Psoas muscle (tissue), 8 donors: ENCODE measurements at regions of chr6 and their contacts with region 1.

Region 1: DNA sequence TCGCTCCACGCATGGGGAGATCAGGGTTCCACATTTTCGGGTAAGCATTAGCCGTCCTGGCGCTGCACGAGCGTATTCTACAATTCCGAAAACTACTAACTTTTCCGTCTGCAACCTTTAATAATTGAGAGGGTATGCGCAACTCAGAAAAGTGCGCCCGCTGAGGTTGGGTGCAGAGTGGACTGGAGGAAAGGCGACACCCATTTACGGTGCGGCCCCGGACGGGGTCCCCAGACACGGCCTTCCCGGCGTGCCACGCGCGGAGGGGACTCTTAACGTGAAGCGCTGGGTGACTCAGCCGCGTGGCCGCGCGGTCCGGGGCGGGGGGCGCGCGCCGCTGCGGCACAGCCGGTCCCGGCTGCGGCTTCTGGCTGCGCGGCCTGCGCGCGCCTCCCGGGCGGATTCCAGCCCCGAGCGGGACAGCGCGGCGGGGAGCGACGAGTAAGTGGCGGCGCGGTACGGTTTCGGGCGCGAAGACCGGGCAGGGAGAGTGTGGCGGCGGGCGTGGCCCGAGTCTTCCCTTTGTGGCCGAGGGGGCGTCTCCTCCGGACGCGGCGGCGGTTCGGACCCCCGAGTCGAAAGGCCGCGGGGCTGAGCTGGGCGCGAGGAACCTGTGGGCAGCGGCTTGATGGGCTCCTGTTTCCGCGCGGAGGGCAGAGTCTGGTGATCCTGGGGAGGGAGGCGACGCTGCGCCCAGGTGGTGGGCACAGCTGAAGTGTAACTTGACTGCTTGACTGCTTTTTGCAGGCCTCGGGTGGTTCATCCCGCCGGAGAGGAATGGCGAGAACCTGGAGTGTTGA is at the starts of genes KCTD20 and PXT1:
- DNase-seq: peak; percentile 91 to 95
- ATAC-seq: peak; percentile 88 to 93 (median 90)
- H3K4me3 ChIP-seq: peak within 1 kb of the TSS; percentile 77
- H3K27ac ChIP-seq: peak within 1 kb of the TSS; percentile 95
- H3K4me1 ChIP-seq: peaks cover 41% of the 10 kb centered on the region
- H3K27me3 ChIP-seq: no peaks in the 10 kb centered on the region
- CTCF ChIP-seq: no peak
- total RNA-seq, gene KCTD20: 20.5 to 30.4 (median 22.3) TPM
- total RNA-seq, gene PXT1: 0.10 to 0.34 (median 0.17) TPM in 3 of 4 donors, not detected in the other

Region 2: DNA sequence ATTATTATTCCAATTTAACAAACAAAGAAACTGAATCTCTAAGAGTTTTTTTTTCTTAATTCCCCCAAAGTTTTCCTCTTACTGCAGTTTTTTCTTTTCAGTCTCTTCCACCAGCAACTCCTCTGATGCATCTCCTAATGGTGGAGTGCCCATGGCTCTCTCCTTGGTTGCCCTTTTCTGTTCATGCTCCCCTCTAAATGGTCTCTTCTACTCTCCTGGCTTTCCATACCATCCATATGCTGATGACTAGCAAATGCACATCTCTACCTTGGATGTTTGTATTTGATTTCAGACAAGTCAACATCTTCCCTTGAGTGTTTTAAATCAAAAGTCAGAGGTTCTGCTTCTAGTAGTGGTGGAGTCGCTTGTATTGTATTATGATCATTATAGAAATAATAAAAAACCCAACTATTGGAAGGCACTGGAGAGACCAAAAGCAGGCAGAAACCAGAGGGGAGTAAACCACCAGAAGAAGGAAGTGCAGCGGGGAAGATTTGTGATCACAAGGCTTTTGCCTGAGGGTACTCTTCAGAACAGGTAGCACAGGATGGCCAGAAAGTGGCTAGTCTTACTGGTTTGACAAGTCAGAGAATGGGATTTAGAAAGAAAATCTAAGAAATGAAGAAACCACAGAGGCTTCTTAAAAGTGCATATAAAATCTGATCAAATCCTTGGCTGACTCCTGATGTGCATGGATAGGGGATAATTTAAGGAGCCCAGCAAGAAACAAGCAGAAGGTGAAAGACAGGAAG is 288.7 kb before region 1 on chr6:
- intact Hi-C with region 1: no loop called
- DNase-seq: no peak
- ATAC-seq: no peak
- H3K4me3 ChIP-seq: no peak overlapping the region
- H3K27ac ChIP-seq: no peak overlapping the region
- H3K4me1 ChIP-seq: no peaks in the 10 kb centered on the region
- H3K27me3 ChIP-seq: no peaks in the 10 kb centered on the region
- CTCF ChIP-seq: no peak

Region 3: GRCh38 chr6:36399970-36400369 is 42.9 kb before region 1 on chr6:
- intact Hi-C with region 1: no loop called
- DNase-seq: no peak
- ATAC-seq: no peak
- H3K4me3 ChIP-seq: no peak overlapping the region
- H3K27ac ChIP-seq: no peak overlapping the region
- H3K4me1 ChIP-seq: no peaks in the 10 kb centered on the region
- H3K27me3 ChIP-seq: no peaks in the 10 kb centered on the region
- CTCF ChIP-seq: no peak

Region 4: GRCh38 chr6:36423101-36423824 is 19.6 kb before region 1 on chr6:
- intact Hi-C with region 1: loop called (anchors 1 to 2 kb)
- DNase-seq: peak; percentile 99
- ATAC-seq: peak; percentile 99 to 100 (median 100)
- H3K4me3 ChIP-seq: peak overlapping the region; percentile 69
- H3K27ac ChIP-seq: peak overlapping the region; percentile 83
- H3K4me1 ChIP-seq: peaks cover 12% of the 10 kb centered on the region
- H3K27me3 ChIP-seq: no peaks in the 10 kb centered on the region
- CTCF ChIP-seq: peak; percentile 59

Region 5: GRCh38 chr6:36546920-36547645 is 104.2 kb after region 1 on chr6 and contains the start of gene STK38:
- intact Hi-C with region 1: loop called in 1 of 2 experiments (anchors 5 kb)
- DNase-seq: peak; percentile 90 to 97
- ATAC-seq: peak; percentile 96 to 98 (median 98)
- H3K4me3 ChIP-seq: peak within 1 kb of the TSS; percentile 99
- H3K27ac ChIP-seq: peak within 1 kb of the TSS; percentile 94
- H3K4me1 ChIP-seq: peaks cover 18% of the 10 kb centered on the region
- H3K27me3 ChIP-seq: no peaks in the 10 kb centered on the region
- CTCF ChIP-seq: no peak
- total RNA-seq, gene STK38: 7.7 to 13.6 (median 12.6) TPM

Region 6: DNA sequence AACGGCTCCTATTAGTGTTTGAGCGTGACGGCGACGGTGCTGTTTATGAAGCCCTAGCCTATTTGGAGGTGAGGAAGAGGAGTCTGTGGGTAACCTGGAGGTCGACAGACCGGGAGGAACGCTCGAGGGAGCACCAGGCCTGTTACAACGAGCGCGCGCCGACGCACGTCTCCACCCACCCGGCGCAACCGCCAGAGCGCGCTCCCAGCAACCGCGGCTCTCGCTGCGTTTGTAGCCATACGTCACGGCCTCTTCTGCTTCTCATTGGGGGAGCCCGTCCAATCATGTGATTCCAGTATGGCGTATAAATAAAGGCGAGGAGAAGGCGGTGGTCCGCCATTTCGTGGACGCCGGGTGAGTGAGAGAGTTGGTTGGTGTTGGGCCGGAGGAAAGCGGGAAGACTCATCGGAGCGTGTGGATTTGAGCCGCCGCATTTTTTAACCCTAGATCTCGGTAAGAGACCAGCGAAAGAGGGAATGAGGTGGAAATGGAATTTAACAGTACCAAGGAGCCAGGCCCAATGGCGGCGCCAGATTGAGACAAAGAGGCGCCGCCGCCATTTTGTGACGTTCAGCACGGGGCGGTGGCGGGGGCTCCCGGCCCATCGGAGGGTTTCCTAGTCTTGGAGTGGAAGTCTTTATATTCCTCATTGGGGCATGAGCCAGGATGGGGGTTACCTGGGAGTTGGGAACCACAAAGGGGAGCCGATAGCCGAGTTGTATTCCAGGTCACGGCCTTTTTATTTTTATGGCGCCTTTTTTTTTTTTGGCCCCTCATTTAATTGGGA is 151.4 kb after region 1 on chr6 and contains the start of gene SRSF3:
- intact Hi-C with region 1: loop called (anchors 5 to 10 kb)
- DNase-seq: peak; percentile 96 to 98
- ATAC-seq: peak; percentile 95 to 98 (median 98)
- H3K4me3 ChIP-seq: peak within 1 kb of the TSS; percentile 86
- H3K27ac ChIP-seq: peak within 1 kb of the TSS; percentile 96
- H3K4me1 ChIP-seq: peaks cover 32% of the 10 kb centered on the region
- H3K27me3 ChIP-seq: no peaks in the 10 kb centered on the region
- CTCF ChIP-seq: peak; percentile 51
- total RNA-seq, gene SRSF3: 64.6 to 182 (median 125) TPM

Region 7: DNA sequence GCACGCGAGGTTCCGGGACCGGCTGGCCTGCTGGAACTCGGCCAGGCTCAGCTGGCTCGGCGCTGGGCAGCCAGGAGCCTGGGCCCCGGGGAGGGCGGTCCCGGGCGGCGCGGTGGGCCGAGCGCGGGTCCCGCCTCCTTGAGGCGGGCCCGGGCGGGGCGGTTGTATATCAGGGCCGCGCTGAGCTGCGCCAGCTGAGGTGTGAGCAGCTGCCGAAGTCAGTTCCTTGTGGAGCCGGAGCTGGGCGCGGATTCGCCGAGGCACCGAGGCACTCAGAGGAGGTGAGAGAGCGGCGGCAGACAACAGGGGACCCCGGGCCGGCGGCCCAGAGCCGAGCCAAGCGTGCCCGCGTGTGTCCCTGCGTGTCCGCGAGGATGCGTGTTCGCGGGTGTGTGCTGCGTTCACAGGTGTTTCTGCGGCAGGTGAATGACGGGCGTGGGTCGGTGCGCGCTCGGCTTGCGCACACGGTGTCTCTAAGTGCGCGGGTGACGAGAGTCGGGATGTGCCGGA is 235.7 kb after region 1 on chr6 and contains the start of gene CDKN1A:
- intact Hi-C with region 1: loop called in 1 of 2 experiments (anchors 10 kb)
- DNase-seq: peak; percentile 93 to 96
- ATAC-seq: peak; percentile 72 to 80 (median 76)
- H3K4me3 ChIP-seq: peak within 1 kb of the TSS; percentile 91
- H3K27ac ChIP-seq: peak within 1 kb of the TSS; percentile 99
- H3K4me1 ChIP-seq: peaks cover 38% of the 10 kb centered on the region
- H3K27me3 ChIP-seq: no peaks in the 10 kb centered on the region
- CTCF ChIP-seq: no peak
- total RNA-seq, gene CDKN1A: 39.2 to 666 (median 157) TPM